ENCODE measurements at regions of chr13 and their contacts with region 1.

Region 1: DNA sequence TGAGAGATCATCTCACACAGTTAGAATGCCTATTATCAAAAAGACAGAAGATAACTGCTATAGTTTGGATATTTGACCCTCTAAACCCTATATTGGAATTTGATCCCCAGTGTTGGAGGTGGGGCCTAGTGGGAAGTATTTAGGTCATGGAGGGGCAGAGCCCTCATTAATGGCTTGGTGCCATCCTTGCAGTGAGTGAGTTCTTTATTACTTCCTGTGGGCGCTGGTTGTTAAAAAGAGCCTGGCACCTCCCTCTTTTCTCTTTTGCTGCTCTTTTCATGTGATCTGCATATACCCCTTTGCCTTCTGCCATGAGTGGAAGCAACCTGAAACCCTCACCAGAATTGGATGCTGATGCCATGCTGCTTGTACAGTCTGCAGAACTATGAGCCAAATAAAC is 66.8 kb downstream of the TDRD3 start:
- DNase-seq: no peak

Region 2: GRCh38 chr13:58547419-58547818 is 1916.4 kb before region 1 on chr13:
- intact Hi-C with region 1: loop called in 1 of 2 experiments (anchors 10 kb)
- DNase-seq: no peak

Region 3: DNA sequence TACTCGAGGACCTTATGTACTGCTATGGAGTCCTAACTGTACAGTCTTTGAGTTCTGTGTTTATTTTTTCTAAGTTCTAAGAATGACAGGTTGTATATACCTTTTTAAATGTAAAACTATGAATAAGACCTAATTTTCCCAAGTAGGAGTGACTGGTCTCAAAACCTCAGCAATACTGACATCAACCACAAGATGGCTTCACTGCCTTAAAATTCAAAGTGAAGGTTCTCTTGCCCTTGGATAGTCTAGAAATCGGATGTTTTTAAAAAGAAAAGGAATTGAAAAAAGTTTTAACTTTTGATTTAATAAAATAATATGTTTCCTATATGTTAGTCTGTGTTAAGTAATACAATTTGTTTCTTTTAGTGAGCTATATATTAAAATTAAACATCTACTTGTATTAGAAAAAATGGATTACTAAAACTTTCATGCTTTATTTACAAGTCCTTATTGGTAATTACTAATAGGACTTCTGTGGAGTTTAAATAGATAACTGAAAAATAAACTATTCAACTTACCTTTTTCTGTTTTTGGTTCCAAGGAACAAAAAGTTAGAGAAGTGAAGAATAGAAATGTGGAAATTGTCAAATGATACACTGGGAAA is 14.8 kb before region 1 on chr13:
- intact Hi-C with region 1: loop called in 1 of 2 experiments (anchors 2 kb)
- DNase-seq: no peak